ENCODE measurements at regions of chr14 and their contacts with region 1.

Region 1: DNA sequence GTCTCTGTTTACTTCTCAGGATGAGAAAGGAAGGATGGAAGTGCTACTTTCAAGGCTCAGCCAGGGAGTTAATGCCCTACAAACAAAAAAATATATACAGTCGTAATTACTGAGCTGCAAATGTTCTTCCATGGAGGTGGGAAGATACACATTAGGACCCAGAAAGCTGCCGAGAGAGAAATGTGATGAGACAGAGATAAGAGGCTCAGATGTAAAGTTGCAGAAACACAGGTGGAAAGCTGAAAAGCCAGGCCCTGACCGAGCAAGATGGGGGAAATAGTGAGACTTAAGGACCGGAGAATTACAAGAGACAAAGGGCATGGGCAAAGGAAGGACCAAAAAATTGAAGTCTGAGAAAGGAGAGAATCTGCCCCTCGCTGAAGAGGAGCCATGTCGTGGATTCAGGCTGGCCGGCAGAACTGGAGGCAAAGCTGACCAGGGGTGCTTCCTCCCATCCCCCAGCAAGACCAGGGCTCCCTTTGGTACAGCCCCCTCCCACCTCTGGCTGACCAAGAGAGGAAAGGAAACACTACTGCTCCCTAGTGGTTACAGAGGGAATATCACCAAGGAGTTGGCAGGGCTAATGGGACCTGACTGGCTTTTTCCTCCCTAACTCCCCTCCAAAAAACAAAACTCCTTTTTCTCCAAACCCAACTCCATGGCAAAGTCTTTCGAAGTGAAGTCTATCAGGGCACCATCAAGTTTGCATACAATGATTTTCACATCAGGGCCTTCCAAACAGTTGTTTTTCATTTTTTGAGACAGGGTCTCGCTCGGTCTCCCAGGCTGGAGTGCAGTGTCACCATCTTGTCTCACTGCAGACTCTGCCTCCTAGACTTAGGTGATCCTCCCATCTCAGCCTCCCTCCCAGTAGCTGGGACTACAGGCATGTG is 12.1 kb downstream of the ZFHX2 start:
- DNase-seq: no peak
- ATAC-seq: peak; percentile 95
- H3K4me3 ChIP-seq: no peak overlapping the region
- H3K27ac ChIP-seq: no peak overlapping the region
- H3K4me1 ChIP-seq: no peaks in the 10 kb centered on the region
- H3K27me3 ChIP-seq: no peaks in the 10 kb centered on the region
- CTCF ChIP-seq: peak; percentile 68 to 85 (median 84)
- EP300 ChIP-seq: no peak
- POLR2A ChIP-seq: no peak
- RAD21 ChIP-seq: peak; percentile 61

Region 2: GRCh38 chr14:23478111-23478759 is 61.3 kb before region 1 on chr14:
- CTCF ChIA-PET with region 1: interaction called, 126 read pairs
- POLR2A ChIA-PET with region 1: no interaction called
- RAD21 ChIA-PET with region 1: interaction called, 10 read pairs
- SMC1A ChIA-PET with region 1: interaction called, 5 read pairs
- in situ Hi-C with region 1: no loop called
- intact Hi-C with region 1: no loop called
- DNase-seq: peak; percentile 16
- ATAC-seq: peak; percentile 84
- H3K4me3 ChIP-seq: no peak overlapping the region
- H3K27ac ChIP-seq: no peak overlapping the region
- H3K4me1 ChIP-seq: no peaks in the 10 kb centered on the region
- H3K27me3 ChIP-seq: no peaks in the 10 kb centered on the region
- CTCF ChIP-seq: peak; percentile 56 to 78 (median 66); a peak in 5 of 6 replicates
- EP300 ChIP-seq: no peak
- POLR2A ChIP-seq: no peak
- RAD21 ChIP-seq: peak; percentile 71

Region 3: DNA sequence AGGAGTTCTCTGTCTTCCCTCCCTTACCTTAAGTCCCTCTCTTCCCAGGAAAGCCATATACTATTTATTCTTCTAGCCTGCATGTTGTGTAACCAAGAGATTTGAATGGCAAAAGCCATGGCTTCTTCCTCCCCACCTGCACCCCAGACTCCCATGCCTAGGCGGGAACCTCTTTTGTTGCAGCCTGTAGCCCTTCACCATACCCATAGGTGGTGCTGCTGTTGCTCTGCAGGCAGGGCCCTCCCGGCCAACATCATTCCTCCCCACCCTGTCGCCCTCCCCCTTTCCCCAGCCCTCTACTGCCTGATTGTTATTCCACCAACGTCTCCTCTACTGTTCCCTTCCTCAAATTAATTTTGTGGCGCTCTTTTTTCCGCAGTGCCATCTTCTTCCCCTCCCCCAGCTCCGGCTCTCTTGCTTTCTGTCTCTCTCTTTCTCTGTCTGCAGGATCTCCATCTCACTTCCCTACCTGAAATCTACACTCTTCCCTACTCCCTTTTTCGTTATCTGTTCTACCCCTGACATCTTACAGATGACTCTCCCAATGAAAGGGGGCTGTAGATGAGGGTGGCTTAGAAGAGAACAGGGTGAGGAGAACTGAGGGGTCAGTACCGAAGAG is 56.1 kb before region 1 on chr14:
- CTCF ChIA-PET with region 1: interaction called, 126 read pairs
- POLR2A ChIA-PET with region 1: no interaction called
- RAD21 ChIA-PET with region 1: interaction called, 10 read pairs
- SMC1A ChIA-PET with region 1: interaction called, 5 read pairs
- in situ Hi-C with region 1: no loop called
- intact Hi-C with region 1: no loop called
- DNase-seq: no peak
- ATAC-seq: peak; percentile 88
- H3K4me3 ChIP-seq: no peak overlapping the region
- H3K27ac ChIP-seq: no peak overlapping the region
- H3K4me1 ChIP-seq: no peaks in the 10 kb centered on the region
- H3K27me3 ChIP-seq: no peaks in the 10 kb centered on the region
- CTCF ChIP-seq: peak; percentile 29 to 54 (median 35); a peak in 4 of 6 replicates
- EP300 ChIP-seq: no peak
- POLR2A ChIP-seq: no peak
- RAD21 ChIP-seq: peak; percentile 51

Region 4: GRCh38 chr14:23494223-23494622 is 45.3 kb before region 1 on chr14:
- CTCF ChIA-PET with region 1: interaction called, 3 read pairs
- POLR2A ChIA-PET with region 1: no interaction called
- RAD21 ChIA-PET with region 1: no interaction called
- SMC1A ChIA-PET with region 1: no interaction called
- in situ Hi-C with region 1: no loop called
- intact Hi-C with region 1: loop called (anchors 5 kb)
- DNase-seq: no peak
- ATAC-seq: no peak
- H3K4me3 ChIP-seq: no peak overlapping the region
- H3K27ac ChIP-seq: no peak overlapping the region
- H3K4me1 ChIP-seq: no peaks in the 10 kb centered on the region
- H3K27me3 ChIP-seq: no peaks in the 10 kb centered on the region
- CTCF ChIP-seq: no peak
- EP300 ChIP-seq: no peak
- POLR2A ChIP-seq: no peak
- RAD21 ChIP-seq: no peak

Region 5: GRCh38 chr14:23567192-23568020 is 27.9 kb after region 1 on chr14 and contains the start of gene AP1G2:
- CTCF ChIA-PET with region 1: interaction called, 131 read pairs
- POLR2A ChIA-PET with region 1: no interaction called
- RAD21 ChIA-PET with region 1: no interaction called
- SMC1A ChIA-PET with region 1: no interaction called
- in situ Hi-C with region 1: no loop called
- intact Hi-C with region 1: no loop called
- DNase-seq: peak; percentile 69
- ATAC-seq: peak; percentile 95
- H3K4me3 ChIP-seq: peak within 1 kb of the TSS; percentile 93
- H3K27ac ChIP-seq: peak within 1 kb of the TSS; percentile 76
- H3K4me1 ChIP-seq: peaks cover 11% of the 10 kb centered on the region
- H3K27me3 ChIP-seq: no peaks in the 10 kb centered on the region
- CTCF ChIP-seq: no peak
- EP300 ChIP-seq: 0 out of 4 replicates have a peak, but pooled peaks of 1 of the 2 experiments have one; percentile 31
- POLR2A ChIP-seq: peak; percentile 92
- RAD21 ChIP-seq: no peak
- polyA plus RNA-seq, gene AP1G2: 55.6 to 65.5 TPM

Region 6: GRCh38 chr14:23605931-23606585 is 66.6 kb after region 1 on chr14:
- CTCF ChIA-PET with region 1: no interaction called
- POLR2A ChIA-PET with region 1: no interaction called
- RAD21 ChIA-PET with region 1: no interaction called
- SMC1A ChIA-PET with region 1: no interaction called
- in situ Hi-C with region 1: no loop called
- intact Hi-C with region 1: no loop called
- DNase-seq: peak; percentile 83
- ATAC-seq: peak; percentile 89
- H3K4me3 ChIP-seq: no peak overlapping the region
- H3K27ac ChIP-seq: peak overlapping the region; percentile 92
- H3K4me1 ChIP-seq: peaks cover 52% of the 10 kb centered on the region
- H3K27me3 ChIP-seq: no peaks in the 10 kb centered on the region
- CTCF ChIP-seq: no peak
- EP300 ChIP-seq: peak in 1 of 2 experiments; percentile 79; a peak in 1 of 4 replicates
- POLR2A ChIP-seq: peak; percentile 32; the same call in 1 of the 2 replicates
- RAD21 ChIP-seq: no peak

Region 7: GRCh38 chr14:23665375-23666192 is 126.1 kb after region 1 on chr14:
- CTCF ChIA-PET with region 1: no interaction called
- POLR2A ChIA-PET with region 1: no interaction called
- RAD21 ChIA-PET with region 1: no interaction called
- SMC1A ChIA-PET with region 1: no interaction called
- in situ Hi-C with region 1: no loop called
- intact Hi-C with region 1: no loop called
- DNase-seq: no peak
- ATAC-seq: peak; percentile 85
- H3K4me3 ChIP-seq: no peak overlapping the region
- H3K27ac ChIP-seq: no peak overlapping the region
- H3K4me1 ChIP-seq: no peaks in the 10 kb centered on the region
- H3K27me3 ChIP-seq: no peaks in the 10 kb centered on the region; a peak in 1 of 4 replicates
- CTCF ChIP-seq: peak; percentile 55 to 76 (median 69)
- EP300 ChIP-seq: no peak
- POLR2A ChIP-seq: no peak
- RAD21 ChIP-seq: peak; percentile 66

Region 8: DNA sequence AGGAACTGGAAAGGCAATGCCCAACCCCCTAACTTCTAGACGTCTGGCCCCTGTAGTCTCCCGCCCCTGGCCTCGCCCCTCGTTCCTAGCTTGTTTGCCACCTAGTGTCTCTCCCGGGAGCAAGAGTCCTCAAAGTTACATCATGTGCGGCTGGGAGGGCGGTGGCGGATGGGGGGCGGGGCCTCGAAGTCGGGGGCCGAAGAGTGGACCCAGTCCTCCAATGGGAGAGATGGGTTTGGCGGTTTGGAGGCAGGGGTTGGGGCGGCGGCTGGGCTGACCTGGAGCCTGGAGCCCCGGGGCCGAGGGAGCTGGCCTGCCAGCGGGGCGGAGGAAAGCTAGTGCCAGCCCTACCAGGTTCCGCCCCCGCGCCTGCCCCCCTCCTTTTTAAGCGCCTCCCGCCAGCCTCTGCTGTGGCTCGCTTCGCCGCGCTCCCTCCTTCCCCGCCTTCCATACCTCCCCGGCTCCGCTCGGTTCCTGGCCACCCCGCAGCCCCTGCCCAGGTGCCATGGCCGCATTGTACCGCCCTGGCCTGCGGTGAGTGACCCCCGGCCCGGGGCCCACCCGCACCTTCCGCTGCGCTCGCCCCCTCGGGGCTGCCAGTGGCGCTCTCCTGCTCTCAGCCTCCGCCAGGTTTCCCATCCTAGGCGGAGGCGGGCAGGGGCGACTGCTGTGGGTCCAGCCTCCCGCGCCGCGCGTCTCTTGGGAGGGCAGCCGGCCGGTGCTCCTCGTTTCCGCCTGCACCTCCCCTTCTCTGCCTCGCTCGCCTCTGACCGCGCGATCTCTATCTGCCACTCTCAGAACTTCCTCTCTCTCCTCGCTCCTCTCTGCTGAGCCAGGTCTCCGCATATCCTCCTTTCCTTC is 554.6 kb after region 1 on chr14 and contains the start of gene PCK2:
- CTCF ChIA-PET with region 1: no interaction called
- POLR2A ChIA-PET with region 1: no interaction called
- RAD21 ChIA-PET with region 1: no interaction called
- SMC1A ChIA-PET with region 1: no interaction called
- in situ Hi-C with region 1: no loop called
- intact Hi-C with region 1: no loop called
- DNase-seq: no peak
- ATAC-seq: peak; percentile 79
- H3K4me3 ChIP-seq: peak within 1 kb of the TSS; percentile 98
- H3K27ac ChIP-seq: peak within 1 kb of the TSS; percentile 99
- H3K4me1 ChIP-seq: 0 out of 2 replicates have a peak, but pooled peaks cover 3% of the 10 kb centered on the region
- H3K27me3 ChIP-seq: no peaks in the 10 kb centered on the region
- CTCF ChIP-seq: no peak
- EP300 ChIP-seq: no peak
- POLR2A ChIP-seq: peak; percentile 91
- RAD21 ChIP-seq: no peak
- polyA plus RNA-seq, gene PCK2: 6.6 to 12.3 TPM